Adrenal gland (tissue), 19 donors: ENCODE measurements at regions of chr6 and their contacts with region 1.

Region 1: GRCh38 chr6:106556368-106556960 is 72.8 kb downstream of the RTN4IP1 start:
- DNase-seq: no peak
- H3K4me3 ChIP-seq: no peak overlapping the region
- H3K27ac ChIP-seq: no peak overlapping the region
- H3K4me1 ChIP-seq: no peaks in the 10 kb centered on the region
- H3K27me3 ChIP-seq: no peaks in the 10 kb centered on the region
- CTCF ChIP-seq: peak in 3 of 6 experiments; percentile 4 to 30 (median 27)
- POLR2A ChIP-seq: no peak

Region 2: GRCh38 chr6:106244931-106245330 is 311.5 kb before region 1 on chr6:
- intact Hi-C with region 1: no loop called
- DNase-seq: no peak
- H3K4me3 ChIP-seq: no peak overlapping the region
- H3K27ac ChIP-seq: no peak overlapping the region
- H3K4me1 ChIP-seq: no peaks in the 10 kb centered on the region
- H3K27me3 ChIP-seq: no peaks in the 10 kb centered on the region
- CTCF ChIP-seq: no peak
- POLR2A ChIP-seq: no peak

Region 3: GRCh38 chr6:106339334-106340029 is 217.0 kb before region 1 on chr6:
- intact Hi-C with region 1: loop called (anchors 10 kb)
- DNase-seq: peak; percentile 29 to 71 (median 62)
- H3K4me3 ChIP-seq: no peak overlapping the region
- H3K27ac ChIP-seq: no peak overlapping the region
- H3K4me1 ChIP-seq: no peaks in the 10 kb centered on the region
- H3K27me3 ChIP-seq: no peaks in the 10 kb centered on the region
- CTCF ChIP-seq: peak; percentile 55 to 67 (median 59)
- POLR2A ChIP-seq: no peak

Region 4: DNA sequence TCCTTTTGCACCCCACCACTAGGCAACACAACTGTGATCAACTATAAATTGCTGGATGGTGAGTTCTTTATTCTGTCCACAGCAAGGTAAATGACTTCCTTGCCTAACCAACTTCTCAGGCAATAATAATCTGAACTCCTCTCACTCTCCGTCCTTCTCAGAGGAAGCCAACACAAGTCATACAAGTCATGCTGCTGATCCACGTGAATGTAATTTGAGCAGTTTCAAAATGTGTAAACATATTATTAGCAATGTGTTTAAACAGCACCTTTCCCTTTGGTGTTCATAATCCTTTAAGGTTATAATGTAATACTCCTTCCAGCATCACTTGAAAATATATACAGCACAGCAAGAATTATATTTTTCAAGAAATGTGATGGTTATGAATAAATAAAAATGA is 200.8 kb after region 1 on chr6:
- intact Hi-C with region 1: no loop called
- DNase-seq: no peak
- H3K4me3 ChIP-seq: no peak overlapping the region
- H3K27ac ChIP-seq: no peak overlapping the region
- H3K4me1 ChIP-seq: no peaks in the 10 kb centered on the region
- H3K27me3 ChIP-seq: no peaks in the 10 kb centered on the region
- CTCF ChIP-seq: no peak
- POLR2A ChIP-seq: no peak